ENCODE measurements at regions of chr5 and their contacts with region 1.

Region 1: DNA sequence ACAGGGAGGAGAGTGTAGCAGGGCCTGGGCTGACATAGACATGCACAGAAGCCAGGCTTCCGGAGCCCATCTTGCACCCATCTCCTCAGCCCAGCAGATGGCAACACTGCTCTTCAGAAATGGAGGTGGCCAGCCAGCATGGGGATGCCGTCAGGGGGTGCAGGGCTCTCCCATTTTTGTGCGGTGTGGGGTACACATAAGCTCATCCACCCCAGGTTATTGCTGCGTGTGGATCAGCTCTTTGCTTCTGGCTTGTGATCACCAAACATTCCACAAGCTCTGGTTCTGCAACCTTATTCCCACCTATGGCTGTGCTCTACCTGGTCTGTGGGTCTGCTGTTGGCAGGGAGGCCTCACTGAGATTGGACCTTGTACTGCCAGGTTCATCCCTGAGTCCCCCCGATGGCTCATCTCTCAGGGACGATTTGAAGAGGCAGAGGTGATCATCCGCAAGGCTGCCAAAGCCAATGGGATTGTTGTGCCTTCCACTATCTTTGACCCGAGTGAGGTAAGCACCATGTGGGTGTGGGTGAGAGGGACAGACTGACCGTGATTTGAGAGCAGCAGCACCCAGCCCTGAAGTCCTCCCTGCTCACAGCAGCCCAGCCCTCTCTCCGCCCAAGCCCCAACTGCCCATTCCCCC is 17.3 kb downstream of the SLC22A5 start:
- DNase-seq: peak; percentile 87
- H3K4me3 Mint-ChIP-seq: no peak overlapping the region
- H3K27ac Mint-ChIP-seq: peak overlapping the region; percentile 13
- H3K4me1 Mint-ChIP-seq: peaks cover 53% of the 10 kb centered on the region
- H3K27me3 Mint-ChIP-seq: no peaks in the 10 kb centered on the region
- CTCF ChIP-seq: peak; percentile 89

Region 2: GRCh38 chr5:132227485-132228240 is 159.1 kb before region 1 on chr5 and contains the start of gene P4HA2:
- CTCF ChIA-PET with region 1: interaction called, 3 read pairs
- POLR2A ChIA-PET with region 1: interaction called, 4 read pairs
- intact Hi-C with region 1: loop called (anchors 5 kb)
- DNase-seq: peak; percentile 86
- H3K4me3 Mint-ChIP-seq: peak within 1 kb of the TSS; percentile 74
- H3K27ac Mint-ChIP-seq: no peak within 1 kb of the TSS
- H3K4me1 Mint-ChIP-seq: peaks cover 32% of the 10 kb centered on the region
- H3K27me3 Mint-ChIP-seq: no peaks in the 10 kb centered on the region
- CTCF ChIP-seq: peak; percentile 21
- total RNA-seq, gene P4HA2: 53.1 and 91.1 TPM in 2 replicates

Region 3: GRCh38 chr5:132369474-132370180 is 17.1 kb before region 1 on chr5 and contains the start of gene SLC22A5:
- CTCF ChIA-PET with region 1: interaction called, 29 read pairs
- POLR2A ChIA-PET with region 1: interaction called, 124 read pairs
- intact Hi-C with region 1: loop called (anchors 2 kb)
- DNase-seq: peak; percentile 84
- H3K4me3 Mint-ChIP-seq: peak within 1 kb of the TSS; percentile 79
- H3K27ac Mint-ChIP-seq: peak within 1 kb of the TSS; percentile 39
- H3K4me1 Mint-ChIP-seq: peaks cover 44% of the 10 kb centered on the region
- H3K27me3 Mint-ChIP-seq: no peaks in the 10 kb centered on the region
- CTCF ChIP-seq: no peak
- total RNA-seq, gene SLC22A5: 122 and 167 TPM in 2 replicates

Region 4: DNA sequence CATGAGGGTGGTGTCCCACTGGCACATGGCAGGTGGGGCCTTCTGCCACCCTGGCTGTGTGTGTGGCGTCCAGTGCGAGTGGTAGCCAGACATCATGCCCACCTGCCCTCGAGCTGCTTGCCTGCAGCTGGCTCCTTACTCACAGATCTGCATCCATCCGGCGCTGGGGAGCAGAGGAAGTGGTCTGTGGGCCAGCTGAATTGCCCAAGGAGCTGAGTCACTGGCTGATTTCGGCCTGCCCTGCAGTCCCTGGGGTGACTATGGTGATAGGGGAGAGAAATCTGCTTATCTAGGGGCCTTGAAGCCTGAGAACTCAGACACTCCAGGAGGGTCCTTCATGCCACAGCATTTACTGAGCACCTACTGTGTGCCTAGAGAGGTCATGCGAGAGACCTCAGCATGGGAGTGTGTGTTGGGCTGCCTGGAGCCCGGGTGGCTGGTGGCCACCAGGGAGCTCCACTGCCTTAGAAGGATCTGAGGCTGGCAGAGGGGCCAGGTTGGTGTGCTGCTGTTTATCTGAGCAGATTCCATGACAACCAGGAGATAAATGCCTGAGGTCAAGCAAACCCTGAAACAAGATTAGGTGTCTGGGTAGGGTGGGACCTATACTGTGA is 39.9 kb after region 1 on chr5:
- CTCF ChIA-PET with region 1: interaction called, 6 read pairs
- POLR2A ChIA-PET with region 1: interaction called, 20 read pairs
- intact Hi-C with region 1: no loop called
- DNase-seq: peak; percentile 96
- H3K4me3 Mint-ChIP-seq: no peak overlapping the region
- H3K27ac Mint-ChIP-seq: peak overlapping the region; percentile 68
- H3K4me1 Mint-ChIP-seq: peaks cover 47% of the 10 kb centered on the region
- H3K27me3 Mint-ChIP-seq: no peaks in the 10 kb centered on the region
- CTCF ChIP-seq: peak; percentile 22

Region 5: GRCh38 chr5:132490486-132491367 is 104.0 kb after region 1 on chr5 and contains the start of gene IRF1:
- CTCF ChIA-PET with region 1: interaction called, 359 read pairs
- POLR2A ChIA-PET with region 1: interaction called, 88 read pairs
- intact Hi-C with region 1: no loop called
- DNase-seq: peak; percentile 99
- H3K4me3 Mint-ChIP-seq: peak within 1 kb of the TSS; percentile 87
- H3K27ac Mint-ChIP-seq: peak within 1 kb of the TSS; percentile 84
- H3K4me1 Mint-ChIP-seq: peaks cover 50% of the 10 kb centered on the region
- H3K27me3 Mint-ChIP-seq: no peaks in the 10 kb centered on the region
- CTCF ChIP-seq: peak; percentile 11
- total RNA-seq, gene IRF1: 18.7 and 23.0 TPM in 2 replicates

Region 6: DNA sequence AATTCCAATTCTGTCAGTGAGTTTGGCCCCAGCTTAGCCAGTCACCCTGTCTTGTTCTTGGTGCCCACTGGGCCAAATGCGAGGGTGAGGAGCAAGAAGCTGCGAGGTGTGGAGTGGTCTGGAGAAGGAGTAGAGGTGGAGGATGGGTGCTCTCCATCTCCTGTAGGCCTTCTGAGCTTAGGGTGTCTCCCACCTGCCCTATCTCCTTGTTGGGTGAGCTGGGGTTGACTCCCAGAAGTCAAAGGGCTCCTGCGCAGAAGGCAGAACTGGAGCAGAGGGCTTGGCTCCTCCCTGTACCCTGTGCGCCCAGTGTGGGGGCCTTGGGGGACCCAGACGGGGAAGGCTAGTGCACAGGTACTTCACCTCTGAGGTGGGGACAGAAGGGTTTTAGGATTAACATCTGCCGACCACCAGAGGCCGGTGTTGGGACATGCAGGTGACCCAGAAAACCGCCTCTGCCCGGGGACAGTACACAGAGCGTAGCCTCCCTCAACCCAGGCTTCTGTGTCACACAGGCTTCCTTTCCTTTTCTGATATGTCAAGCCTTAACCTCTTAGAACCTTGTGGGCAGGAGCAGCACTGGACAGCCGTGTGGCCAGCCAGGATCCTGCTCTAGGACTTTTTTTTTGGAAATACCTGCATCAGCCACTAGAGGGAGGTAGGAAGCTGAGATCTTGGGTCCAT is 139.7 kb after region 1 on chr5:
- CTCF ChIA-PET with region 1: interaction called, 11 read pairs
- POLR2A ChIA-PET with region 1: interaction called, 3 read pairs
- intact Hi-C with region 1: no loop called
- DNase-seq: peak; percentile 83
- H3K4me3 Mint-ChIP-seq: no peak overlapping the region
- H3K27ac Mint-ChIP-seq: no peak overlapping the region
- H3K4me1 Mint-ChIP-seq: no peaks in the 10 kb centered on the region
- H3K27me3 Mint-ChIP-seq: peaks cover 23% of the 10 kb centered on the region
- CTCF ChIP-seq: peak; percentile 96